CD4-positive, alpha-beta memory T cell (primary cell): ENCODE measurements at regions of chr1 and their contacts with region 1.

Region 1: DNA sequence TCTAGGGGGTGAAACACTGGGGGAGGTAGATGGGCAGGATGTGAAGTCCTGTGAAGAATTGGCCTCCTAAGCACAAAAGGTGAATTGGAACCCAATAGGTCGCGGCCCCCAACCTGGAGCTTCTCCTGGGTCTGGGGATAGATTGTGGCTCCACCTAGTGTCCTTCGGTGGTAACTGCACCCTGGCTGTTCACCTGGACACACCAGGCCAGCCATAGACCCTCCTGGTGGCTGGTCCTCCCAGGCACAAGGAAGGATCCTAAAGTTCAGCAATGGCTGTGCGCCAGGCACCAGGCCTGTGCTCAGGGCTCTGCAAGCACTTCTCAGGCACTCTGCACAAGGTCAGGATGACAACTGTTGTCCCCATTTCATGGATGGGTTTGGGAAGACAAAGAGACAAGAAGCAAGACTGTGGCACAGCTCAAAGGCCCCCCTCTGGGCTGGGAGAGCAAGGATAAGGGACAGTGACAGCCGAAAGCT is 13.5 kb downstream of the ESPN start:
- DNase-seq: peak; percentile 68 to 78 (median 71)
- H3K4me3 ChIP-seq: no peak overlapping the region
- H3K4me3 Mint-ChIP-seq: peak overlapping the region in 4 of 8 donors; percentile 20 to 83 (median 36)
- H3K27ac ChIP-seq: no peak overlapping the region
- H3K27ac Mint-ChIP-seq: peak overlapping the region in 3 of 7 donors; percentile 41 to 75 (median 44)
- H3K4me1 ChIP-seq: peaks cover 5% of the 10 kb centered on the region
- H3K4me1 Mint-ChIP-seq: peaks cover 7 to 14% (median 9%) of the 10 kb centered on the region in 4 donors
- H3K27me3 ChIP-seq: no peaks in the 10 kb centered on the region
- H3K27me3 Mint-ChIP-seq: peaks cover 11 to 12% of the 10 kb centered on the region in 2 donors

Region 2: DNA sequence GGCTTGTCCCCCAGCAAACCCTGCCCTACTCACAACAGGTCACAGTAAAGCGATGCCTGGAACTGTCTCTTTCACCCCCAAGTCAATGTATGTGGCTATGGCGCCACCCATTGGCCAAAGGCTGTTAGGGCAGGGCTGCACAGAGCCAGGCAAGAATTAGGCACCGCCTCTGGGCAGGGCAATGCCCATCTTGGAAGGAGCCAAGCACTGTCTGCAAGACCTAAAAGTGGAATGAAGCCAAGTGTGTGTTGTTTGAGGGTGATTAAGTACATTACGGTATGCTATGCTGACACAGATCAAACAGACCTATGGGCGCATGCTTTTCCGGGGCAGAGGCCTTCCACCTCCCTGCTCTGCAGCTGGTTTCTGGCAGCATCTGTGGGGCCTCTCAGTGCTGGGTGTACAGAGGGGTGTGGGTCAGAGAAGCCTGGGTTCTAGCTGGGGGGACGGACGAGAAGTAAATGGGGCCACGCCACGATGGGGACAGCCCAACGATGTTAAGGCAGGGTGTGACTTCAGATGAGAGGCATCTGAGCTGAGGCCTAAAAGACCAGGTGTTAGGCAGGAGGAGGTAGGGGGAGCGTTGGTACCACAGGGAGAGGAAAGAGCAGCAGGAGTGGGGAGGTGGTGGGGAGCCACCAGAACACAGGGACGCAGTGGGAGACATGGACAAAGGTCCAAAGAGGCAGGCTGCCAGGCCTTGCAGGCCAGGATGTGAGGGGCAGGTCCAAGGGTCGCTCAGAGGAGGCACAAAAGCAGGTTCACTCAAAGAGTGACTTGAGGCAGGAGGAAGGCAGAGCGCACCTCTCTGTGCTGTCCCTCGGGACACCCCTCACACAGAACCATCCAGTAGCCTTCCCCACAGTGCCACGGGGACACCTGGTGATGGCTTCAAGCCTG is 94.3 kb before region 1 on chr1:
- CTCF ChIA-PET with region 1: interaction called, 22 read pairs
- POLR2A ChIA-PET with region 1: interaction called, 4 read pairs
- intact Hi-C with region 1: loop called (anchors 1 kb)
- DNase-seq: peak; percentile 50 to 56 (median 51)
- H3K4me3 ChIP-seq: no peak overlapping the region
- H3K4me3 Mint-ChIP-seq: peak overlapping the region in 1 of 8 donors; percentile 37
- H3K27ac ChIP-seq: no peak overlapping the region
- H3K27ac Mint-ChIP-seq: peak overlapping the region in 2 of 7 donors; percentile 29 to 84
- H3K4me1 ChIP-seq: peaks cover 13% of the 10 kb centered on the region
- H3K4me1 Mint-ChIP-seq: peaks cover 8 to 20% (median 11%) of the 10 kb centered on the region in 4 donors
- H3K27me3 ChIP-seq: no peaks in the 10 kb centered on the region
- H3K27me3 Mint-ChIP-seq: no peaks in the 10 kb centered on the region

Region 3: GRCh38 chr1:6385488-6386191 is 52.4 kb before region 1 on chr1:
- CTCF ChIA-PET with region 1: no interaction called
- POLR2A ChIA-PET with region 1: no interaction called
- intact Hi-C with region 1: no loop called
- DNase-seq: no peak
- H3K4me3 ChIP-seq: no peak overlapping the region
- H3K4me3 Mint-ChIP-seq: no peak overlapping the region
- H3K27ac ChIP-seq: no peak overlapping the region
- H3K27ac Mint-ChIP-seq: no peak overlapping the region
- H3K4me1 ChIP-seq: no peaks in the 10 kb centered on the region
- H3K4me1 Mint-ChIP-seq: peaks cover 0 to 2% (median 0%) of the 10 kb centered on the region in 4 donors
- H3K27me3 ChIP-seq: no peaks in the 10 kb centered on the region
- H3K27me3 Mint-ChIP-seq: no peaks in the 10 kb centered on the region

Region 4: DNA sequence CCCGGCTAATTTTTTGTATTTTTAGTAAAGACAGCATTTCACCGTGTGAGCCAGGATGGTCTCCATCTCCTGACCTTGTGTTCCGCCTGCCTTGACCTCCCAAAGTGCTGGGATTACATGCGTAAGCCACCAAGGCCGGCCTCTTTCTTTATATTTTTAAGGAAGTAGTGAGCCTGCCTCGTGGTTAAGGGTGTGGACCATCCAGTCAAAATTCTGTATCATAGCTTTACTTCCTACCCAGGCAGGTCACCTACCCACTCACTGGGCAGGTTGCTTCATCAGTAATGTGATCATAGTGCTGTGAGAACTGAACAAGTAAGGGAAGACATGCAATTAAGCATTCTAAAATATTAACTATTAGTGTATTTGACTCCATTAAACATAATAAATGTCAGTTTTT is 36.4 kb before region 1 on chr1:
- CTCF ChIA-PET with region 1: interaction called, 13 read pairs
- POLR2A ChIA-PET with region 1: no interaction called
- intact Hi-C with region 1: no loop called
- DNase-seq: no peak
- H3K4me3 ChIP-seq: no peak overlapping the region
- H3K4me3 Mint-ChIP-seq: no peak overlapping the region
- H3K27ac ChIP-seq: no peak overlapping the region
- H3K27ac Mint-ChIP-seq: no peak overlapping the region
- H3K4me1 ChIP-seq: no peaks in the 10 kb centered on the region
- H3K4me1 Mint-ChIP-seq: peaks cover 0 to 5% (median 4%) of the 10 kb centered on the region in 4 donors
- H3K27me3 ChIP-seq: no peaks in the 10 kb centered on the region
- H3K27me3 Mint-ChIP-seq: peaks cover 2 to 4% of the 10 kb centered on the region in 2 donors

Region 5: DNA sequence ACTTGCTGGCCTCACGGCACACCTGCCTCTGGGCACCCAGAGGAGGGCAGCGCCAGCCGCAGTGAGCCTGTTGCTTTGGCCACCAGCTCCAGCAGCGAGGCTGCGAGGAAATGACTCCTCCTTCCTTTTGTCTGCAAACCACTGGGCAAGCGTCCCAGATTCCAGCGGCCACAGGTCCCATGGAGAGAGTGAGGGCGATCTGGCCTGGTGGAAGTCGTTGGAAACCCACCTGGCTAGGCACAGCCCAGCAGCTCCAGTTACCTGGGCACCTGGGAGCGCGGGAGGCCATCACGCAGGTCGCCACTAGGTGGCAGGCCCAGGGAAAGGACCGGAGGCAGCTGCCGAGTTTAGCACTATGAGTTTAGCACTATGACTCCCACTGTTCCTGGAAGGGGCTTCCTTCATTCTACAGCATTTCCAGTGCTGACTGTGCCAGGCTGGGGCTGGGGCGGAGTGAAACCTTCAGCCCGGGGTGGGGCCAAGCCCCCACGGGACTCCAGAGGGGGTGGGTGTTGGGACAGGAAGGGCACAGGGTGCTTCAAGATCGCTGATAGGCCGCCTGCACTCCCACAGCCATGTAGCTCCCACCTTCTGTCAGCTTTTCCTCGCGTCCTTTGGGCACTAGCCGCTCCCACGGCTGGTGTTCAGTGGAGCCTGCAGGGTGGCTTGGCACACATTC is 14.6 kb before region 1 on chr1:
- CTCF ChIA-PET with region 1: interaction called, 88 read pairs
- POLR2A ChIA-PET with region 1: interaction called, 8 read pairs
- intact Hi-C with region 1: loop called (anchors 1 kb)
- DNase-seq: peak; percentile 64 to 74 (median 69)
- H3K4me3 ChIP-seq: peak overlapping the region in 1 of 2 donors; percentile 38
- H3K4me3 Mint-ChIP-seq: peak overlapping the region; percentile 46 to 76 (median 68)
- H3K27ac ChIP-seq: no peak overlapping the region
- H3K27ac Mint-ChIP-seq: no peak overlapping the region
- H3K4me1 ChIP-seq: peaks cover 35% of the 10 kb centered on the region
- H3K4me1 Mint-ChIP-seq: peaks cover 6 to 35% (median 19%) of the 10 kb centered on the region in 4 donors
- H3K27me3 ChIP-seq: peaks cover 37% of the 10 kb centered on the region
- H3K27me3 Mint-ChIP-seq: peaks cover 22 to 24% of the 10 kb centered on the region in 2 donors

Region 6: DNA sequence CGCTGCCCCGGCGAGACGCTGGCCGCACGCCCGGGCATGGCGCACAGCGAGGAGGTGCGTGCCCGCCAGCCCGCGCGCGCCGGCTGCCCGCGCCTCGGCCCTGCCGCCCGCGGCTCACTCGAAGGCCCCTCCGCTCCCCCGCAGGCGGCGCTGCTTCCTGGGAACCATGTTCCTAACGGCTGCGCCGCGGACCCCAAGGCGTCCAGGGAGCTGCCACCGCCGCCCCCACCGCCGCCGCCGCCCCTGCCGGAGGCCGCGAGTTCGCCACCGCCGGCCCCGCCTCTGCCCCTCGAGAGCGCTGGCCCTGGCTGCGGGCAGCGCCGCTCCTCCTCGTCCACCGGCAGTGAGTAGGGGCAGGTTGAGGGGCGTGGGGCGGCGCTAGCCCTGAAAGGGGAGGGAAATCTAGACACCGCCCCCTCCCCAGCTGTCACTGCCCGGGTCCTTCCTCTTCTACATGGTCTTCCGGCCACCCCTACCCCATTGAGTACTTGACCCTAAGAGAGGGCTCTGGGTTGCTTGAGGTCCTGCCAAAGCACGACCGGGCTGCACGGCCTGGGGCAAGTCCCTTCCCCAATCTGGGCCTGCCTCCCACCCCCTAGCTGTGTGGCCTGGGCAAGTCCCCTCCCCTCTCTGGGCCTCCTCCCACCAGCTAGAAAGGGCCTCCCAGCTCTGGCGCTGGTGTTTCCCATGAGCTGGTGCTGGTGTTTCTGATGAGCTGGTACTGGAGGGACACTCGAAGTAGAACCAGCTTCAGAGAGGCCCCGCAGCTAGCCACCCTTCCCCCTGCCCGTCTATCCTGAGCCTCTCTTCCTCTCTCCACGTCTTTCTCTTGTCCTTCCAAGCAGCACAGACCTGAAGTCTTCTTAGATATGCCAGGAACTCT is 10.9 kb after region 1 on chr1:
- CTCF ChIA-PET with region 1: interaction called, 24 read pairs
- POLR2A ChIA-PET with region 1: interaction called, 390 read pairs
- intact Hi-C with region 1: no loop called
- DNase-seq: peak in 2 of 5 donors; percentile 37 to 70
- H3K4me3 ChIP-seq: no peak overlapping the region
- H3K4me3 Mint-ChIP-seq: peak overlapping the region in 6 of 8 donors; percentile 42 to 84 (median 60)
- H3K27ac ChIP-seq: no peak overlapping the region
- H3K27ac Mint-ChIP-seq: peak overlapping the region in 6 of 7 donors; percentile 23 to 86 (median 70)
- H3K4me1 ChIP-seq: peaks cover 32% of the 10 kb centered on the region
- H3K4me1 Mint-ChIP-seq: peaks cover 15 to 39% (median 28%) of the 10 kb centered on the region in 4 donors
- H3K27me3 ChIP-seq: peaks cover 11% of the 10 kb centered on the region
- H3K27me3 Mint-ChIP-seq: peaks cover 25 to 32% of the 10 kb centered on the region in 2 donors

Region 7: DNA sequence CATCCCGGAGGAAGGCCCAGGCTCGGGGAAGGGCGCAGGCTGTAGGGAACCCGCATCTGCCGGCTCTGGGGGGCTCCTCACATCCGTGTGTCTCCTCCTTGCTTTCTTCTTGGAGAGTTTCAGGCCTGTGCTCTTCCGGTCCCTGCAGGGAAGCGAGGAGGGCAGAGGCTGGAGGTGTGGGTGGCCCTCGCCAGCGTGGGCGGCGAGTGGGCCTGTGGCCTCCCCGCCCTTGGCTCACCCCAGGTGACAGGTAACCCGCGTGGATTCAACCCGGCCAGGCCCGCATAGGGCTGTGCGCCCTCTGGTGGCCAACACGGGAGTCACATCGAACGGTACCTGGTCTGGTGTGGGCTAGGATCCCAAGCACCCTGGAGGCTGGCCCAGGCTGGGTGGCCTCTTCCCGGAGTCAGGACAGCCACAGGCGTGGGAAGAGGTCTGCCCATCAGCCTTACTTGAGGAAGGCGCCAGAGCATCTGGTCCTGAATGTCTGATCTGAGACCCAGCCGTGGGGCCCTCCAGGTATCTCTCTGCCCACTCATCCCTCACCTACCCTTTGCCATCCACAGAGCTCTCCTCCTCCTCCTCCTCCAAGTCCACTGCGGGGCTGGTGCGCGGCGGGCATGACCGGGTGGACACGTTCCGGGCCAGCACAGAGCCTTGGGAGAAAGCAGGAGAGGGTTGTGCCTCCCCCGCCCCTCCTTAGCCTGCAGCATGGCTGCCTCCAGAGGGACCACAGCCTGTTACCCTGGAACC is 37.5 kb after region 1 on chr1:
- CTCF ChIA-PET with region 1: interaction called, 15 read pairs
- POLR2A ChIA-PET with region 1: no interaction called
- intact Hi-C with region 1: no loop called
- DNase-seq: peak; percentile 76 to 84 (median 79)
- H3K4me3 ChIP-seq: no peak overlapping the region
- H3K4me3 Mint-ChIP-seq: peak overlapping the region in 2 of 8 donors; percentile 35 to 49
- H3K27ac ChIP-seq: no peak overlapping the region
- H3K27ac Mint-ChIP-seq: peak overlapping the region in 2 of 7 donors; percentile 18 to 27
- H3K4me1 ChIP-seq: peaks cover 5% of the 10 kb centered on the region
- H3K4me1 Mint-ChIP-seq: peaks cover 2 to 8% (median 5%) of the 10 kb centered on the region in 4 donors
- H3K27me3 ChIP-seq: no peaks in the 10 kb centered on the region
- H3K27me3 Mint-ChIP-seq: no peaks in the 10 kb centered on the region

Region 8: DNA sequence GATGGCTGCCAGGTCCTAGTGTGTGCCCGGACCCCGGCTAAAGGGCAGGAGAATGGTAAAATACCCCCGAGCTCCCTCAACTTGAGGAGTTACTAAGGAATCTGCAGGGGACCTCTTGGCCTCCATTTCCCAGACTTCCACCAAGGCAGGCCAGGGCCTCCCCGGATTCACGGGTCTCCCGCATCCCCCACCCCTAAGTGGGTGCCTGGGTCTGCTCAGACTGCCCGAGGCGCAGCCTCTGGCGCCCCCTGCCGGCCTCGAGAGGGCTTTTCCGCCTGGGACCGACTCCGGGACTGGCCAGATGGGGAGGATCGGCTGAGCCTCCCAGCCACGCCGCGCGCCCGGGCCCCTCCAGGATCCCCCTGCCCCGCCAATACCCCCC is 51.7 kb after region 1 on chr1:
- CTCF ChIA-PET with region 1: interaction called, 10 read pairs
- POLR2A ChIA-PET with region 1: no interaction called
- intact Hi-C with region 1: no loop called
- DNase-seq: peak; percentile 73 to 80 (median 77)
- H3K4me3 ChIP-seq: peak overlapping the region; percentile 78 to 80
- H3K4me3 Mint-ChIP-seq: peak overlapping the region; percentile 69 to 87 (median 81)
- H3K27ac ChIP-seq: peak overlapping the region; percentile 57
- H3K27ac Mint-ChIP-seq: peak overlapping the region in 3 of 7 donors; percentile 47 to 72 (median 59)
- H3K4me1 ChIP-seq: peaks cover 28% of the 10 kb centered on the region
- H3K4me1 Mint-ChIP-seq: peaks cover 15 to 53% (median 31%) of the 10 kb centered on the region in 4 donors
- H3K27me3 ChIP-seq: peaks cover 10% of the 10 kb centered on the region
- H3K27me3 Mint-ChIP-seq: peaks cover 6 to 9% of the 10 kb centered on the region in 2 donors